ENCODE measurements at regions of chr5 and their contacts with region 1.

Region 1: DNA sequence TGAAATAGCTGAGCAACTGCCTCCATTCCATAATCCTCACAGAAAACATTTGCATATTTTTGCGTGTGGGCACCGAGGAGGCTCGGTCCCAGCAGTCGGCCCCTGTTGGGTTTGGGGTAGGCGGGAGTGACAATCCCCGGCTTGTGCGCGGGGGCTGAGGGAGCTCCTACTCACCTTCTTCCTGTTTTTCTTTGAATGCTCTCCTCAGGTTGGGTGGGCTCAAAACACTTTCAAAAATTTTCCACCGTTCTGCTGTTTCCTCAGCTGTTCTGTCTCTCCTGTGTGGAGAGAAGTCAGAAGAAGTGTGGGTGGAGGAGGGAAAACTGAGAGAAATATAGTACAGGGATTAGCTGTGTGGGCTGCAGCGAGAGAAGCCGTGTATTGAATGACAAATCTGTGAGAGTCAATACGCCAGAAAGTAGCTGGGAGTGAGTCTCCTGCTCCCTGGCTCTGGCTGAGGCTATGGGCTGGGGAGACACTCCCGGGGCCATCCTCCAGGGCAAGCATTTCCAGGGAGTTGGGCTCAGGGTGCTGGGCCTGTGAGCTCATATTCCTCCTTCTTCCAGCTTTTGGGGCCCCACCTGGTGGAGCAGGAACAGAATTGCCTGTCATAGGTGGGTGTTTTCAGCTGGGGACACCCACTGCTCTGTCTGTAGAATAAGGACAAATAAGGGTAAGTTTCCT is 84.7 kb downstream of the CMYA5 start:
- DNase-seq: peak; percentile 78 to 81
- H3K4me3 ChIP-seq: no peak overlapping the region
- H3K4me3 Mint-ChIP-seq: no peak overlapping the region
- H3K27ac Mint-ChIP-seq: no peak overlapping the region
- H3K4me1 ChIP-seq: no peaks in the 10 kb centered on the region
- H3K4me1 Mint-ChIP-seq: no peaks in the 10 kb centered on the region
- H3K27me3 ChIP-seq: no peaks in the 10 kb centered on the region
- H3K27me3 Mint-ChIP-seq: no peaks in the 10 kb centered on the region
- CTCF ChIP-seq: peak; percentile 44 to 80

Region 2: DNA sequence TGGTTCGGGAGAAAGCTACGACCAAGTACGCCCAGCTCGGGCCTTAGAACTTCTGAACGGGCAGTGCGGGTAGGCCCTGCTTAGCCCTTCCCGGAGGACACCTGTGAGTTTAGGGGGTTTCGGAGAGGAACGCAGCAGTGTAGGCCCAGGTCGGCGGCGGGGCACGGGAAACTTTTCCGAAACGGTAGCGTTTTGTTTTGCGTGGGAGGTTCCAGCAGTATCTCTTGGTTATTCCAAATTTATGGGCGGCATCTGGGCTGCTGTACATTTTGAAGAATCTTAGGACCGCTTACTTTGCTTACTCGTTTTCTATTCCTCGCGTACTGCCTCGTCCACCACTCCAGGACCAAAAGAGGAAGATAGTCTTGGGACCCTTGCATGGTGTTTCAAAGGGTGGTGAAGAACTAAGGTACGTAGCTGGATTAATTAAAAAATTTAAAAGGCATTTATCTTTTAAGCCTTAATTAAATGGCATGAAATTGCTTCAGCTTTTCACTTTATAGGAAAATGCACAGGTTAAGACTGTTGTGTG is 161.6 kb before region 1 on chr5:
- CTCF ChIA-PET with region 1: no interaction called
- POLR2A ChIA-PET with region 1: no interaction called
- intact Hi-C with region 1: loop called (anchors 5 kb)
- DNase-seq: no peak
- H3K4me3 ChIP-seq: peak overlapping the region; percentile 88
- H3K4me3 Mint-ChIP-seq: peak overlapping the region; percentile 85
- H3K27ac Mint-ChIP-seq: peak overlapping the region; percentile 81
- H3K4me1 ChIP-seq: 0 out of 2 replicates have a peak, but pooled peaks cover 4% of the 10 kb centered on the region
- H3K4me1 Mint-ChIP-seq: peaks cover 6% of the 10 kb centered on the region
- H3K27me3 ChIP-seq: no peaks in the 10 kb centered on the region
- H3K27me3 Mint-ChIP-seq: no peaks in the 10 kb centered on the region
- CTCF ChIP-seq: no peak

Region 3: DNA sequence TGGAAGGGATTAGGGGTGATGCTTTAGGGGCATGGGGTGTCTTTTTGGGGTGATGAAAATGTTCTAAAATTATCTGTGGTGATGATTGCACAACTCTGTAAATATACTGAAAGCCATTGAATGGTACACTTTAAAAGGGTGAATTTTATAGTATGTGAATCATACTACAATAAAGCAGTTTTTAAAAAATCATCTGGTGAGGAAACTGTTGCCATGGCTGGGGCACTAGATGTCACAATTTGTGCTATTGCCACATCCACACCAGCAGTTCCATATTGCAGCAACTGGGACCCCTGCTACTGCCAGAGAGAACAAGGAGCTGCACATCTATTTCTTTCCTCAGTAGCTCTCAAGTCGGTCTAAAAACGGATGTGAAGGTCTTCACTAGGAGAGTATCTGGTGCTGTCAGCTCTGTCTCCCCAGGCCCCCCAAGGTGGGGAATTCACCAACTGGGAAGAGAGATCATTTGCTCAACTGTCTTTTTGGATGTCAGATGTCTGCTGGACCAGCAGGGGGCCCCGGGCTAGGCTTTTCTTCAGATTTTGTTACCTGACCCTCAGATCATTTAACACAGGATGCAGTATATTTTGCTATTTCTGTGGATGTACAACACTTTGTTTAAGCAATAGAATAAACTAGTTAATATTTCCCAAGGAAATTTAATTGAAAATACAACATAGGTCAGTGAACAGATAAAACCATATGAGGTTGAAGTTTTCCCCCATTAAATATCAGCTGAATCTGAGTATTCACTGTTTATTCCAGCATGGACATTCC is 71.5 kb before region 1 on chr5:
- CTCF ChIA-PET with region 1: interaction called, 15 read pairs
- POLR2A ChIA-PET with region 1: no interaction called
- intact Hi-C with region 1: no loop called
- DNase-seq: peak in 1 of 2 experiments; percentile 49
- H3K4me3 ChIP-seq: no peak overlapping the region
- H3K4me3 Mint-ChIP-seq: no peak overlapping the region
- H3K27ac Mint-ChIP-seq: no peak overlapping the region
- H3K4me1 ChIP-seq: 0 out of 2 replicates have a peak, but pooled peaks cover 5% of the 10 kb centered on the region
- H3K4me1 Mint-ChIP-seq: no peaks in the 10 kb centered on the region
- H3K27me3 ChIP-seq: no peaks in the 10 kb centered on the region
- H3K27me3 Mint-ChIP-seq: no peaks in the 10 kb centered on the region
- CTCF ChIP-seq: peak; percentile 71 to 80

Region 4: DNA sequence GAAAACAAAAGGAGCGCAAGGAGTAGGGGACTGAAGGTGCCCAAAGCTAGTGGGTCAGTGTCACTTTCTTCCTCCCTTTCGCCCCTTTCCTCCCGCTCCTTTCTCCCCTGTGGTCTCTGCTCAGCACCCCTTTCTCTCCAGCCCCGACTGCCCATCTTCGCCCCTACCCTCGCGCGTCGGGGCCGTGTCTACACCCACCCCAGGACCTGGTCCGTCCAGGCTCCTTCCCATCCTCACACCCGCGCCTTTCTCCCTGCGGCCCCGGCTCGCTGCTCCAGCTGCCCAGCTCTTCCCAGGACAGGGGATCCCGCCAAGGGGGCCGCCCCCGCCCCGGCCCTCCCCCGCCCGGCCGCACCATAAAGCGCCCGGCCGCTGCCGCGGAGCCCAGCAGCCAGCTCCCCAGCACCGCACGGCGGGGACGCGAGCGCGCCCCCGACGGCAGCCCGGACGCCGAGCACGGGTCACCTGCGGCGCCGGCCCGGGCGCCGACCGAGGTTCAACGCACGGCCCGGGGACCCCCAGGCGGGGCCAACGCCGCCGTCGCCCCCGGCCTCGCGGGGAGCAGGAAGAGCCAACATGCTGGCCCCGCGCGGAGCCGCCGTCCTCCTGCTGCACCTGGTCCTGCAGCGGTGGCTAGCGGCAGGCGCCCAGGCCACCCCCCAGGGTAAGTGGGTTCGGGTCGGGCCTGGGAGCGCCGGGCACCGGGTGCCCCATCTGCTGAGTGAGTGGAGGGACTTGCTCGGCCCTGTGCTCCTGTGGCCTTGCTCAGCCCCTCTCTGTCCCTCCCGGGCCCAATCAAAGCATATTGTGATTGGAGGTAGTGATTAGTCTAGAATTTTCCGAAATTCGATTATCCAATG is 260.9 kb after region 1 on chr5 and contains the start of gene THBS4:
- CTCF ChIA-PET with region 1: no interaction called
- POLR2A ChIA-PET with region 1: no interaction called
- intact Hi-C with region 1: no loop called
- DNase-seq: no peak
- H3K4me3 ChIP-seq: peak within 1 kb of the TSS; percentile 20
- H3K4me3 Mint-ChIP-seq: peak within 1 kb of the TSS; percentile 29
- H3K27ac Mint-ChIP-seq: no peak within 1 kb of the TSS
- H3K4me1 ChIP-seq: no peaks in the 10 kb centered on the region
- H3K4me1 Mint-ChIP-seq: no peaks in the 10 kb centered on the region
- H3K27me3 ChIP-seq: no peaks in the 10 kb centered on the region
- H3K27me3 Mint-ChIP-seq: peaks cover 11% of the 10 kb centered on the region
- CTCF ChIP-seq: no peak
- total RNA-seq, gene THBS4: 0.28 TPM in 1 of 2 replicates, not detected in the other